ENCODE measurements at regions of chr2 and their contacts with region 1.

Region 1: GRCh38 chr2:236745420-236746197 is 176.0 kb downstream of the ACKR3 start:
- DNase-seq: peak; percentile 71 to 79
- ATAC-seq: peak; percentile 97
- H3K4me3 ChIP-seq: no peak overlapping the region
- H3K27ac ChIP-seq: peak overlapping the region; percentile 73 to 79
- H3K4me1 ChIP-seq: peaks cover 41% of the 10 kb centered on the region
- CTCF ChIP-seq: no peak
- EP300 ChIP-seq: peak; percentile 61 to 69; a peak in 2 of 5 replicates
- POLR2A ChIP-seq: no peak
- RAD21 ChIP-seq: peak; percentile 18 to 56; a peak in 3 of 5 replicates

Region 2: DNA sequence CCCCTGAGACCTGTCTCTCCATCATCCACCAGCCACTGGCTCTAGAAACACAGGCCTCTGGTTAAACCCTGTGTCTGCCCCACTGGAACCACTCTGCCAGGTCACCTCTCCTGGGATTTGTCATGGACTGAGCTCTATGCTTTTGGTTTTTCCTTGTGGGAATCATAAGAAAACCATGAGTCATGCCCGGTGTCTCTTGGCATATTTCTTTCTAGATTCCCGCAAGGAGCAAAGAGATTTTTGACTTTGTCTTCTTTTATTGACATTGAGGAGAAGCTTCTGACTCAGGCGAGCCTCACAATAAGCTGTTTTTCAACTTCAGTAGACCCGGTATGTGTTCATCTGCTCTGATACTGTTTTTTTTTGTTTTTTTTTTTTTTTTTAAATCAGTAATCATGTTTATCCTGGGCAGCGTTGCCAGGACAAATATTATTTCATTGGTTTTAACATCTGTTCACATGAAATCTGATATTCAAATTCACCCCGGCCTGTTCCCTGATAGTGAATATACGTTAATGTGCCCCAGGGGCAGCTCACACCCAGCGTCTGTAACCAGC is 31.2 kb after region 1 on chr2:
- CTCF ChIA-PET with region 1: interaction called, 5 read pairs
- POLR2A ChIA-PET with region 1: interaction called, 10 read pairs
- DNase-seq: peak; percentile 33 to 85
- ATAC-seq: peak; percentile 84 to 87
- H3K4me3 ChIP-seq: no peak overlapping the region
- H3K27ac ChIP-seq: peak overlapping the region; percentile 79 to 94
- H3K4me1 ChIP-seq: peaks cover 23% of the 10 kb centered on the region
- CTCF ChIP-seq: no peak
- EP300 ChIP-seq: peak; percentile 46 to 57; a peak in 2 of 5 replicates
- POLR2A ChIP-seq: no peak
- RAD21 ChIP-seq: peak in 1 of 2 experiments; percentile 47; a peak in 2 of 5 replicates

Region 3: DNA sequence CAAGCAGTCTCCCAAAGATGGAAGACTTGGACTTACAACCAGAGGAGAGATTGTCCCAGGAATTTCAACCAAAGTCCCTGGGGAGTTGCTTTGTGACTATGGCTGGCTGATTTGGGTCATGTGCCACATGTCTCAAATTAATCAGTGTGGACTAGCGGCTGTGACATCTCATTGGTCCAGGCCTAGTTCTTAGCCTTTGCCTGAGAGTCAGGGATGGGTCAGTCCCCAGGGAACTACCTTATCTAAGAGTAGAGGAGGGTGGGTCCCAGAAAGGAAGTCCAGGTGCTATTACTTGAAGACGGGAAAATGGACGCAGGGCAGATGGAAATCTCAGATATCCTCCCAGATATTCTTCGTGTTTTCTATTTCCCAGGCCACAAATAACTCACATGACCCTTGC is 41.2 kb after region 1 on chr2:
- CTCF ChIA-PET with region 1: no interaction called
- POLR2A ChIA-PET with region 1: no interaction called
- DNase-seq: no peak
- ATAC-seq: no peak
- H3K4me3 ChIP-seq: no peak overlapping the region
- H3K27ac ChIP-seq: no peak overlapping the region
- H3K4me1 ChIP-seq: peaks cover 10% of the 10 kb centered on the region; the same call in 2 of the 3 replicates
- CTCF ChIP-seq: no peak
- EP300 ChIP-seq: no peak
- POLR2A ChIP-seq: no peak
- RAD21 ChIP-seq: no peak

Region 4: DNA sequence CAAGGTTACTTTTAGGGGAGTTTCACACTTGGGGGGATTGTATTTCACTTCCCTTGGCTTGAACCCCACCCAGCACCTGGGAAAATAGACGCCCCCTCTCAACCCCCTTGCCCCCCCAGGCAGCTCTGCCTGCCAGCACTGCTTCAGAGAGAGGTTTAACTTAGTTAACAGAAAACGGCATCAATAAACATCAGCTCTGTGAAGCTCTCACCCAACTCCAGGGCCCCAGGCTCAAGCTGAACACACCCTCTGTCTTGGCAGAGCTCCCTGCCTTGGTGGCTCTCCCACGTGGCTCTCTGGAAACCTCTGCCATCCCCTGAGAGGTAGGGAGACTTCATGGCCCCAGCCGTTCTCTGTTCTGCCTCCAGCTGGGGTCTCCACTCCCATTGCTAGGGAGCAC is 68.2 kb after region 1 on chr2:
- CTCF ChIA-PET with region 1: no interaction called
- POLR2A ChIA-PET with region 1: no interaction called
- DNase-seq: no peak
- ATAC-seq: no peak
- H3K4me3 ChIP-seq: no peak overlapping the region
- H3K27ac ChIP-seq: no peak overlapping the region
- H3K4me1 ChIP-seq: no peaks in the 10 kb centered on the region
- CTCF ChIP-seq: no peak
- EP300 ChIP-seq: no peak
- POLR2A ChIP-seq: no peak
- RAD21 ChIP-seq: no peak

Region 5: GRCh38 chr2:237128026-237128703 is 382.6 kb after region 1 on chr2:
- CTCF ChIA-PET with region 1: no interaction called
- POLR2A ChIA-PET with region 1: no interaction called
- DNase-seq: peak; percentile 89 to 92
- ATAC-seq: peak; percentile 98 to 99
- H3K4me3 ChIP-seq: no peak overlapping the region
- H3K27ac ChIP-seq: peak overlapping the region; percentile 73 to 94
- H3K4me1 ChIP-seq: peaks cover 22% of the 10 kb centered on the region
- CTCF ChIP-seq: no peak
- EP300 ChIP-seq: peak; percentile 75 to 82; a peak in 2 of 5 replicates
- POLR2A ChIP-seq: no peak
- RAD21 ChIP-seq: peak in 1 of 2 experiments; percentile 38; a peak in 2 of 5 replicates